Mammary epithelial cell (primary cell): ENCODE measurements at regions of chr5 and their contacts with region 1.

Region 1: DNA sequence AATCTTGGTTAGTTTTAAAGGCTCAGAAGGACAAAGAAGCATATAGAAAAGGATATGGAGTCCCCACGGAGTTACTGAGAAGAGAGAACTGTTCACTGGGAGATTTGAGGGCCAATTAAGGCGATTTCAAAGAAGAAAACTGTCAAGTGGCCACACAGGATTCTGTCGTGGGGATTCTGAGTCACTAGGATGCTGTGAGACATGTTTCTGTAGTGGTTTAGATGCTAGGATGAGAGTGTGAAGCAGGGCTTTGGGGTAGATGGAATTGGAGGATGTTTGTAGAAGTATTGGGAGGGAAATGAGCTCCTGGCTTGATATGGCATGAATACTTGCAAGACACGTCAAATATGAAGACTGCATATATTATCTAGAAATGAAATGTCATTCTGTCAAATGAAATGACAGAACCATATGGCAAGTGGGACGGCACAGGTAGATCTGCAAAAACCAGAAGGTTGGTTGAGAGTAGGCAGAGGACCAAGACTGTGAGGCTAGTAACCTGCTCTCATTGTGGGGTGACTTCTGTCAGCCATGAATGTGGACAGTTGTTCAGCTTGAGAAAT is 136.3 kb upstream of the SPRY4 start:
- DNase-seq: no peak
- H3K4me3 ChIP-seq: no peak overlapping the region
- H3K27ac ChIP-seq: no peak overlapping the region
- H3K4me1 ChIP-seq: no peaks in the 10 kb centered on the region
- H3K27me3 ChIP-seq: no peaks in the 10 kb centered on the region
- CTCF ChIP-seq: no peak

Region 2: GRCh38 chr5:142408981-142409481 is 52.1 kb before region 1 on chr5:
- CTCF ChIA-PET with region 1: no interaction called
- dilution Hi-C with region 1: loop called (anchors 5 kb)
- in situ Hi-C with region 1: no loop called
- intact Hi-C with region 1: no loop called
- DNase-seq: no peak
- H3K4me3 ChIP-seq: no peak overlapping the region
- H3K27ac ChIP-seq: no peak overlapping the region
- H3K4me1 ChIP-seq: peaks cover 8% of the 10 kb centered on the region
- H3K27me3 ChIP-seq: no peaks in the 10 kb centered on the region
- CTCF ChIP-seq: no peak

Region 3: DNA sequence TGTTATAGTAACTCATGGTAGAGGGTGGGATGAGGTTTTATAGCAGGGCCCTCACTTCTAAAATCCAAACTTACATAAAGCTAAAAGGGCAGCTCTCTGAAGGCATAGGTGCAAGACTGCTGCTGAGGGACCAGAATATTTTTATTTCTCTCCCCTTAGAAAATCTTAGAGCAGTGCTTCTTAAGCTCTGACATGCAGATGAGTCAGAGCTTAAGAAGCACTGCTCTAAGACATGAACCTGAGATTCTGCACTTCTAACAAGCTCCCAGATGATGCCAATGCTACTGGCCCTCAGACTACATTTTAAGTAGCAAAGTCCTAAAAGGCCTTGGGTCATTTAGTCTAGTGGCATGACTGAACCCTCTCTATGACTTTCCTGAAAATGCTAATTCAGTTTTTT is 38.7 kb before region 1 on chr5:
- CTCF ChIA-PET with region 1: interaction called, 33 read pairs
- dilution Hi-C with region 1: no loop called
- in situ Hi-C with region 1: no loop called
- intact Hi-C with region 1: no loop called
- DNase-seq: peak; percentile 53
- H3K4me3 ChIP-seq: no peak overlapping the region
- H3K27ac ChIP-seq: no peak overlapping the region
- H3K4me1 ChIP-seq: peaks cover 20% of the 10 kb centered on the region
- H3K27me3 ChIP-seq: no peaks in the 10 kb centered on the region
- CTCF ChIP-seq: no peak

Region 4: DNA sequence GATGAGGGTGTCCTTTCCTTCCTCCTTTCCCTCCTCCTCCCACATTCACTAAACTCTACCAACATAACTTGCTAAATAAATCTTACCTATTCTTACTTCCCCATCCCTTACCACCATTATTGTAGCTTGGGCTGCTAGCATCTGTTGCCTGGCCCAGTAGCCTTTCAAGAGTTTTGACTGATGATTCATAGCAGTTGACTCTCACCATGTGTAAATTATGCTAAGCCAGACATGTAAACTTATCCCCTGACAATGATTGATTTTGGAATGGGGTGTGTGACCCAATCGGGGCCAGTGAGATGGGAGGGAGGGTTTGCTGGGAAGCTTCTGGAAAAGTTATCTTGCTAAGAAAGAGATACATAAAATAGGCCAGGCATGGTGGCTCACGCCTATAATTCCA is 25.5 kb after region 1 on chr5:
- CTCF ChIA-PET with region 1: no interaction called
- dilution Hi-C with region 1: no loop called
- in situ Hi-C with region 1: no loop called
- intact Hi-C with region 1: no loop called
- DNase-seq: no peak
- H3K4me3 ChIP-seq: no peak overlapping the region
- H3K27ac ChIP-seq: no peak overlapping the region
- H3K4me1 ChIP-seq: no peaks in the 10 kb centered on the region
- H3K27me3 ChIP-seq: no peaks in the 10 kb centered on the region
- CTCF ChIP-seq: no peak

Region 5: GRCh38 chr5:142542906-142543305 is 81.8 kb after region 1 on chr5:
- CTCF ChIA-PET with region 1: no interaction called
- dilution Hi-C with region 1: loop called (anchors 5 kb)
- in situ Hi-C with region 1: no loop called
- intact Hi-C with region 1: no loop called
- DNase-seq: no peak
- H3K4me3 ChIP-seq: no peak overlapping the region
- H3K27ac ChIP-seq: no peak overlapping the region
- H3K4me1 ChIP-seq: no peaks in the 10 kb centered on the region
- H3K27me3 ChIP-seq: no peaks in the 10 kb centered on the region
- CTCF ChIP-seq: no peak